ENCODE measurements at regions of chr7 and their contacts with region 1.

Region 1: DNA sequence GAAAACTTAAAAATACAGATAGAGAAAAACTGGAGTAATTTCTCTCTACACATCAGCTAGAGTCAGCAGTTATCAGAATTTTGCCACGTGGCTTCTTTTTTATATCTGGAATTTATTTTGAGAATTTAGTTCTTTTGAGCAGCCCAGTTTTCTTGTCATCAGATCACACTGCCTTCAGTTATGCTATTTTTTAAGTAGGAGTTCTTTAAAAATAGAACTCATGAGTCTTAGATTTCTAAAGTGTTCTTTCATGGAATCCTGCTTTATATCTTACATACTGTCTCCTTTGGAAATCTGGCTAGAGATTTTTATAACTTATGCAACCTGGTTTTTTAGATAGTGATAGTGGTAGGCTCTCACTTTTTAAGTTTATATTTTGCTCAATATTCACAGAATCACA is 24.2 kb downstream of the AGR2 start:
- DNase-seq: no peak
- H3K4me3 Mint-ChIP-seq: no peak overlapping the region
- H3K27ac Mint-ChIP-seq: no peak overlapping the region
- H3K4me1 Mint-ChIP-seq: peaks cover 10% of the 10 kb centered on the region
- H3K27me3 Mint-ChIP-seq: no peaks in the 10 kb centered on the region
- CTCF ChIP-seq: no peak

Region 2: DNA sequence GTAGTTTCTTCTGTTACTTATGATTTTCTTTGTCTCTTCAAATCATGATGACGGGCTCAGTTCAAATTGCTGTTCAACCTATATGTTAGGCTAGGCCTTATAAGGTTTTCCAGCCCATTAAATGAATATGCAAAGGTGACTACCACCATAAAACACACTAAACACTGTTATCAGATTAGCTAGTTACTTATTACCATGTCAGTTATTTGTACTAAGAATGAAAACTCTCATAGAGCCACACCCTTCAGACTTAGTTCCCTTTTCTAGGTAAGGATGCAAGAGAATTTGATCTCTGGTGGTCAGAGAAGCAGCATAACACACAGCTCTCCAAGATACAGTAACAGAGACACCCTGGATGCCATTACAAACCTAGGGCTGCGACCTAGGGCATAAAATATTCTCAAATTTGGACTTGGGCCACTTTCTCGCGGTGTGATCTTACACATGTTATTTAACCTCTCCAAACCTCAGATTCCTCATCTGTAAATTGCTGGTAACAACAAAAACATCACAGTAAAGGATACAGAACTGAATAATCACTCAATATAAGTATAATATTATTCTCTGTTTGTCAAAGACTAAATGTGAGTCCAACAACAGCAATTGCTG is 170.7 kb before region 1 on chr7:
- CTCF ChIA-PET with region 1: no interaction called
- intact Hi-C with region 1: loop called (anchors 5 kb)
- DNase-seq: peak; percentile 44
- H3K4me3 Mint-ChIP-seq: peak overlapping the region; percentile 50
- H3K27ac Mint-ChIP-seq: peak overlapping the region; percentile 63
- H3K4me1 Mint-ChIP-seq: peaks cover 49% of the 10 kb centered on the region
- H3K27me3 Mint-ChIP-seq: no peaks in the 10 kb centered on the region
- CTCF ChIP-seq: no peak

Region 3: DNA sequence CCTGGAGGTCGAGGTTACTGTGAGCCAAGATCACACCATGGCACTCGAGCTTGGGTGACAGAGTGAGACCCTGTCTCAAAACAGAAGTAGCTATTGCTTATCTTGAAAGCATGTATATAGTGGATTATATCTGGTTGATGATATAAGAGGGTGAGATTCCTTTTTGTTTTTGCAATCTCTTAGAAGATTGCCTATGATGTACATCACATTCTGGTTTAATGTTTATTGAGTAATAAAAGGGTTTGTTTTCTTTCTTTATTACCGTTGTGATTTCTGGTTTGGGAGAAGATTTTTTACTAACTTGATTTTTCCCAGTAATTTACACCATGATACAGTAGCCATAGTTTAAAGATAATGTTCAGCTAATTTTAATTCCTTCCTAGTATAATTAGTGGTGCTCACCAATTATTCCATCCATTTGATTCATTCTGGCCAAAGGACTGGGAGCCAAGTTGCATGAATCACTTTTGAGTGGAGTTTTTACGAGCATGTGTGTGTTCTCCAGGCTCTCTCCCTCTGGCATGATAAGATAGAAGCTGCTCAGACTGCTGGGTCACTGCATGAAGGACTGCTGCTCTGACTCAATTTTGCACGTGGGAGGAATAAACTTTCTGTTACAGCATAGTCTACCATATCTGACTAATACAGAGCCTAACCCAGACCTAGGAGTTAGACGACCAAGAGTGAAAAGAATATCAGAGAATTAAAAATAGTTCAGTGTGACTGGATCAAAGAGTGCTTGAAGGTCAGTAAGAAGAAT is 40.6 kb before region 1 on chr7:
- CTCF ChIA-PET with region 1: no interaction called
- intact Hi-C with region 1: no loop called
- DNase-seq: no peak
- H3K4me3 Mint-ChIP-seq: no peak overlapping the region
- H3K27ac Mint-ChIP-seq: no peak overlapping the region
- H3K4me1 Mint-ChIP-seq: peaks cover 25% of the 10 kb centered on the region
- H3K27me3 Mint-ChIP-seq: no peaks in the 10 kb centered on the region
- CTCF ChIP-seq: no peak